Mammary epithelial cell (primary cell): ENCODE measurements at regions of chr7 and their contacts with region 1.

Region 1: DNA sequence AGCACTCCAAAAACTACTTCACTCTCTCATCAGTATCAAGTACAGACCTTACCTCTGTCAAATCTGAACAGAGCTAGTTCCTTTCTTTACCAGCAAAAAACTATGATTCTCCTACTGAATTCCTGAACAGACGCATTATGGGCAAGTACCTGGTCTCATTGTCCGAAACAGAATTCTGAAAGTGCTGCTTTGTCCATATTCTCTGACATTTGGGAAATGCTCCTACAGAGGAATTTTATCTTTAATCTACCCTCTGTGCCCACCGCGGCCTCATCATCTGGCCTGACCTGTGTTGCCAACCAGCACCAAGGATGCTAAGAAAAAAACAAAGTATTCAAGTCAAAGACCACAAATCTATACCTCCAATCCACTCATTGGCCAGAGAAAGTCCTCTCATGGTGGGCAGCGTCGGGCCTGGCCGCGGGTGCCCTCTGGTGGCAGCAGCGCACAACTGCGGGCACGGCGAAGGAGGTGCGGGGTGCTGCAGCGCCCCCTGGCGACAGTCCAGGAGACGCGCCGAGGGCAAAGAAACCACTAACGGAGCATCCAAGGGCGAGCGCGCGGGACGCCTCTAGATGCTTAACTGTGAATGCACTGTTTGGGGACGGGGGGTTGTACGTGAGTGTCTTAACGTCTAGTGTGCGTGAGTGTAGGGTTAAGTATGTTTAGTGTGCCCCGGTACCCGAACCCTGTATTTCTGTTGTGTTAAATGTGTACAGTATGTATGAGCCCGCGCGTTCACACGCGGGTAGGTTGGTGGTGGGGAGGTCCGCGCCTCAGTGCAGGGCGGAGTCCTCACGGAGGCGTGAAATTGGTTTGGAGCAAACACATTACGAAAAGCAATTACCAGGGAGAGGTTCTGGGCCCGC is 5.0 kb upstream of the GBX1 start:
- DNase-seq: peak; percentile 56
- H3K4me3 ChIP-seq: no peak overlapping the region
- H3K27ac ChIP-seq: no peak overlapping the region
- H3K4me1 ChIP-seq: no peaks in the 10 kb centered on the region
- H3K27me3 ChIP-seq: peaks cover 20% of the 10 kb centered on the region
- CTCF ChIP-seq: peak; percentile 100

Region 2: GRCh38 chr7:150778738-150779301 is 393.7 kb before region 1 on chr7:
- CTCF ChIA-PET with region 1: no interaction called
- dilution Hi-C with region 1: no loop called
- in situ Hi-C with region 1: no loop called
- intact Hi-C with region 1: loop called (anchors 2 kb)
- DNase-seq: peak; percentile 42
- H3K4me3 ChIP-seq: no peak overlapping the region
- H3K27ac ChIP-seq: no peak overlapping the region
- H3K4me1 ChIP-seq: no peaks in the 10 kb centered on the region
- H3K27me3 ChIP-seq: no peaks in the 10 kb centered on the region
- CTCF ChIP-seq: peak; percentile 86 to 92

Region 3: GRCh38 chr7:150898475-150899011 is 274.0 kb before region 1 on chr7:
- CTCF ChIA-PET with region 1: no interaction called
- dilution Hi-C with region 1: no loop called
- in situ Hi-C with region 1: no loop called
- intact Hi-C with region 1: loop called (anchors 1 kb)
- DNase-seq: peak; percentile 46
- H3K4me3 ChIP-seq: no peak overlapping the region
- H3K27ac ChIP-seq: no peak overlapping the region
- H3K4me1 ChIP-seq: peaks cover 8% of the 10 kb centered on the region
- H3K27me3 ChIP-seq: peaks cover 2% of the 10 kb centered on the region
- CTCF ChIP-seq: peak; percentile 86 to 91

Region 4: GRCh38 chr7:151123822-151124464 is 48.6 kb before region 1 on chr7:
- CTCF ChIA-PET with region 1: interaction called, 4 read pairs
- dilution Hi-C with region 1: no loop called
- in situ Hi-C with region 1: no loop called
- intact Hi-C with region 1: loop called (anchors 1 kb)
- DNase-seq: peak; percentile 66
- H3K4me3 ChIP-seq: no peak overlapping the region
- H3K27ac ChIP-seq: no peak overlapping the region
- H3K4me1 ChIP-seq: no peaks in the 10 kb centered on the region
- H3K27me3 ChIP-seq: no peaks in the 10 kb centered on the region
- CTCF ChIP-seq: peak; percentile 99

Region 5: DNA sequence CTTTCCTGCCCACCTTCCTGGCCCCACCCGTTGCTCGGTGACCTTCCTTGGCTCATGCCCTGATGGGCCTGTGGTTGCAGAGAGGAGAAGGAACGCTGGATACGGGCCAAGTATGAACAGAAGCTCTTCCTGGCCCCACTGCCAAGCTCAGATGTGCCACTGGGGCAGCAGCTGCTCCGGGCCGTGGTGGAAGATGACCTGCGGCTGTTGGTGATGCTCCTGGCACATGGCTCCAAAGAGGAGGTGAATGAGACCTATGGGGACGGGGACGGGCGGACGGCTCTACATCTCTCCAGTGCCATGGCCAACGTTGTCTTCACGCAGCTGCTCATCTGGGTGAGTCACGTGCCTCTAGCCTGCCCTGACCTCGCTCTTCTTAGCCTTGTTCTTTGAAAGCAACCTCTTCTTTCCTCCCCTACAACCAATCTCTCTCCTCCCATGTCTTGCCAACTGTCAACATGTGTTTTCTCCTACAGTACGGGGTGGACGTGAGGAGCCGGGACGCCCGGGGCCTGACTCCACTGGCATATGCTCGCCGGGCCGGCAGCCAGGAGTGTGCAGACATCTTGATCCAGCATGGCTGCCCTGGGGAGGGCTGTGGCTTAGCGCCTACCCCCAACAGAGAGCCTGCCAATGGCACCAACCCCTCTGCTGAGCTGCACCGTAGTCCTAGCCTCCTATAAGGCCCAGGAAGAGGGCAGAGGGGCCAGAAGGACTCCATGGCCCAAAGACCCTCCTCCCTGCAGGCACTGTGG is 29.1 kb before region 1 on chr7:
- CTCF ChIA-PET with region 1: interaction called, 4 read pairs
- dilution Hi-C with region 1: no loop called
- in situ Hi-C with region 1: no loop called
- intact Hi-C with region 1: loop called (anchors 1 kb)
- DNase-seq: no peak
- H3K4me3 ChIP-seq: no peak overlapping the region
- H3K27ac ChIP-seq: no peak overlapping the region
- H3K4me1 ChIP-seq: peaks cover 25% of the 10 kb centered on the region
- H3K27me3 ChIP-seq: no peaks in the 10 kb centered on the region
- CTCF ChIP-seq: no peak

Region 6: DNA sequence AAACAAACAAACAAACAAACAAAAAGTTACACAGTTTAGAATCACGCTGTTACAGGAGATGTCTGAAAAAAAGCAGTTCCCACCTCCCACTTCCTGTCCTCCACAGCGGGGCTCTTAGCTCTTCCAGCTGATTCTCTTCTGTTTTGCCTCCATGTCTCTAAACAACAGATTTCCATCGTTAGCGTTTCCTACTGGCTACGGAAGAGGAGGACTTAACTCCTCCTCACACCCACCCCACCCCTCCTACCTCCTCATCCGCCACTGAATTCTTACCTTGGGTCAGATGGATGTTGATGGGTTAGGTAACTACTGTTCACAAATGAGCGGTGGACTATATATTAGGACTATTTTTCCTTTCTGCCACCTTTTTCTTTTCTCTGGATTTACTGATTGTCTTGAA is 132.3 kb after region 1 on chr7:
- CTCF ChIA-PET with region 1: no interaction called
- dilution Hi-C with region 1: no loop called
- in situ Hi-C with region 1: no loop called
- intact Hi-C with region 1: loop called (anchors 1 kb)
- DNase-seq: no peak
- H3K4me3 ChIP-seq: no peak overlapping the region
- H3K27ac ChIP-seq: no peak overlapping the region
- H3K4me1 ChIP-seq: peaks cover 7% of the 10 kb centered on the region
- H3K27me3 ChIP-seq: no peaks in the 10 kb centered on the region
- CTCF ChIP-seq: no peak